ENCODE measurements at regions of chr9 and their contacts with region 1.

Region 1: GRCh38 chr9:108093773-108094675 is 604.5 kb upstream of the KLF4 start:
- DNase-seq: peak; percentile 81
- H3K27ac ChIP-seq: peak overlapping the region; percentile 73
- CTCF ChIP-seq: no peak

Region 2: GRCh38 chr9:108108852-108109448 is 14.9 kb after region 1 on chr9:
- CTCF ChIA-PET with region 1: interaction called, 11 read pairs
- POLR2A ChIA-PET with region 1: no interaction called
- DNase-seq: no peak
- H3K27ac ChIP-seq: no peak overlapping the region
- CTCF ChIP-seq: no peak

Measured in RWPE1 (cell line).